Caco-2 (cell line): ENCODE measurements at regions of chr12 and their contacts with region 1.

Region 1: GRCh38 chr12:79407671-79408622 is 282.8 kb downstream of the PAWR start:
- DNase-seq: peak; percentile 85 to 86
- H3K4me3 ChIP-seq: no peak overlapping the region
- H3K4me3 Mint-ChIP-seq: peak overlapping the region; percentile 30
- H3K27ac Mint-ChIP-seq: peak overlapping the region; percentile 73
- H3K4me1 ChIP-seq: peaks cover 50% of the 10 kb centered on the region
- H3K4me1 Mint-ChIP-seq: peaks cover 35% of the 10 kb centered on the region
- H3K27me3 ChIP-seq: no peaks in the 10 kb centered on the region
- H3K27me3 Mint-ChIP-seq: no peaks in the 10 kb centered on the region
- CTCF ChIP-seq: peak; percentile 59 to 87

Region 2: GRCh38 chr12:79547735-79548609 is 140.0 kb after region 1 on chr12:
- CTCF ChIA-PET with region 1: no interaction called
- POLR2A ChIA-PET with region 1: no interaction called
- intact Hi-C with region 1: loop called (anchors 1 kb)
- DNase-seq: peak; percentile 69 to 74
- H3K4me3 ChIP-seq: no peak overlapping the region
- H3K4me3 Mint-ChIP-seq: peak overlapping the region; percentile 57
- H3K27ac Mint-ChIP-seq: peak overlapping the region; percentile 97
- H3K4me1 ChIP-seq: peaks cover 56% of the 10 kb centered on the region
- H3K4me1 Mint-ChIP-seq: peaks cover 56% of the 10 kb centered on the region
- H3K27me3 ChIP-seq: no peaks in the 10 kb centered on the region
- H3K27me3 Mint-ChIP-seq: no peaks in the 10 kb centered on the region
- CTCF ChIP-seq: peak; percentile 56 to 67

Region 3: DNA sequence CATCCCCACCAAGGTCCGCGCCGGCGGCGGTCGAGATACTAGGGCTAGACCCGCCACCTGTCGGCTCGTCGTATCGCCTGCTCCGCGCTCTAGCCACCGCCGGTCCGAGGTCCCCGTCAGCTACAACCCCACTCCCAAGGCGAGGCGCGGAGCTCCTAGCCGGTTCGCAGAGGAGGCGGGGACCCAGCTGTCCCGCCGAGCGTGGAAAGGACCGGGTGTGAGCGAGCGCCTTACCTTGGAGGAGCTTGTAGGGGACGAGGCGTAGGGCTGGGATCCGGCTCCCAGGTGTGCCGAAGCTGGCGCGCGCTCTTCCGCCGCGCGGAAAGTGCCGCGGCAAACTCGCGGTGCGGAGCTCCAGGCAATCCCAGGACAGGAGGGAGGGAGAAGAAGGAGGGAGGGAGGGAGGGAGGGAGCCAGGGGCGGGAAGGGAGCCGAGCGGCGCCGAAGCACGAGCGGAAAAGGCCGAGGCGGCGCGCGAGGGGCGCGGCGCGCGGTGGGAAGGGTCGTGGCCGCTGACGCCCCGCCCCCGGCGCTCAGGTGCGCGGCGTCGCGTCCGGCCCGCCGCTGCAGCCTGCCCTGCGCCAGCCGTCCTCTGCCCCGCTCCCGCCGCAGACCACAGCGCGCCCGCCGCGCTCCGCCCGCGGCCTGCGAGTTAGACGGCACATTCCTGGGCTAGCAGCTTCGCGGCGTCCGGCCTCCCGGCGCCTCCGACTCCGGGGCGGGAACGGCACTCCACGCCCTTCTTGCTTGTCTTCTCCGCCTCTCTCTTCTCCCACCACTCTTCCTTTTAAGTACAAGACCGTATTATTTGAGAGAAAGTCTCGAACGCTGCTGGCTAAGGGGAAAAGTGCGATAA is 282.9 kb after region 1 on chr12 and contains the start of gene PAWR:
- CTCF ChIA-PET with region 1: interaction called, 3 read pairs
- POLR2A ChIA-PET with region 1: no interaction called
- intact Hi-C with region 1: loop called (anchors 2 kb)
- DNase-seq: peak; percentile 89 to 92
- H3K4me3 ChIP-seq: peak within 1 kb of the TSS; percentile 98
- H3K4me3 Mint-ChIP-seq: peak within 1 kb of the TSS; percentile 89
- H3K27ac Mint-ChIP-seq: peak within 1 kb of the TSS; percentile 90
- H3K4me1 ChIP-seq: peaks cover 19% of the 10 kb centered on the region
- H3K4me1 Mint-ChIP-seq: peaks cover 23% of the 10 kb centered on the region
- H3K27me3 ChIP-seq: no peaks in the 10 kb centered on the region
- H3K27me3 Mint-ChIP-seq: no peaks in the 10 kb centered on the region
- CTCF ChIP-seq: no peak
- total RNA-seq, gene PAWR: 157 and 163 TPM in 2 replicates

Region 4: DNA sequence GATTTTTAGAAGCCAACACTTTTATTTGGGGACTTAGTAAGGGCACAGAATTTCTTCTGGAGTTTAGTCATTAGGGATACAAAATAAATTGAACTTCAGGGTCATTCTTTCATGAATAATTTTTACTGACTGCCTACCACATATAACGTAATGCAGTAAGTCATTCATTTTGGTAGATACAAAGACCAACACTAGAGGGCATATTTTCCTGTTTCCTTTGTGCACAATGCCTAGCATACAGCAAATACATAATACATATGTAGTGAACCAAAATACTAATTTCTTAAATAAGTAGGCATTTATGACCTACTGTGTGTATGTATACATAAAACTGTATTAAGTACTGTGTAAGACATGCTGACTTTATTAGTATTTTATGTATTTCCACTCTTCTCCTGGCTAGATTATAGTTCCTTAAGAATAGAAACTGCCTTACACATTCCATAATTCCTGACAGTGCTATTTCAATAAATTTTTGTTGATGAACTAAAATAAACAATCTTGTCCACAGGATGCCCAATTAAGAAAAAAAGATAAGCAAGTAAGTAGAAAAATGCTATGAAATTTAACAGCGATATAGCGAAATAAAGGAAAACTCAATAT is 479.1 kb after region 1 on chr12:
- CTCF ChIA-PET with region 1: no interaction called
- POLR2A ChIA-PET with region 1: no interaction called
- intact Hi-C with region 1: loop called (anchors 10 kb)
- DNase-seq: peak in 1 of 2 experiments; percentile 44
- H3K4me3 ChIP-seq: no peak overlapping the region
- H3K4me3 Mint-ChIP-seq: no peak overlapping the region
- H3K27ac Mint-ChIP-seq: no peak overlapping the region
- H3K4me1 ChIP-seq: no peaks in the 10 kb centered on the region
- H3K4me1 Mint-ChIP-seq: peaks cover 8% of the 10 kb centered on the region
- H3K27me3 ChIP-seq: no peaks in the 10 kb centered on the region
- H3K27me3 Mint-ChIP-seq: no peaks in the 10 kb centered on the region
- CTCF ChIP-seq: peak; percentile 46 to 63

Region 5: GRCh38 chr12:80186727-80187217 is 778.8 kb after region 1 on chr12:
- CTCF ChIA-PET with region 1: interaction called, 3 read pairs
- POLR2A ChIA-PET with region 1: no interaction called
- intact Hi-C with region 1: loop called (anchors 1 kb)
- DNase-seq: peak; percentile 63 to 67
- H3K4me3 ChIP-seq: no peak overlapping the region
- H3K4me3 Mint-ChIP-seq: no peak overlapping the region
- H3K27ac Mint-ChIP-seq: no peak overlapping the region
- H3K4me1 ChIP-seq: no peaks in the 10 kb centered on the region
- H3K4me1 Mint-ChIP-seq: no peaks in the 10 kb centered on the region
- H3K27me3 ChIP-seq: no peaks in the 10 kb centered on the region
- H3K27me3 Mint-ChIP-seq: no peaks in the 10 kb centered on the region
- CTCF ChIP-seq: peak; percentile 62 to 83